Activated T-helper 1 cell treated with anti-CD3 and anti-CD28 coated beads, Interleukin-12 subunit alpha, Interleukin-12 subunit beta, Interleukin-2, Interleukin-4 antibody, amounts not matched to agents 30 ng/mL and 10 ng/mL and 1 ng/mL, durations not matched to agents 14 hours and 24 hours and 36 hours (primary cell): ENCODE measurements at regions of chr11 and their contacts with region 1.

Region 1: DNA sequence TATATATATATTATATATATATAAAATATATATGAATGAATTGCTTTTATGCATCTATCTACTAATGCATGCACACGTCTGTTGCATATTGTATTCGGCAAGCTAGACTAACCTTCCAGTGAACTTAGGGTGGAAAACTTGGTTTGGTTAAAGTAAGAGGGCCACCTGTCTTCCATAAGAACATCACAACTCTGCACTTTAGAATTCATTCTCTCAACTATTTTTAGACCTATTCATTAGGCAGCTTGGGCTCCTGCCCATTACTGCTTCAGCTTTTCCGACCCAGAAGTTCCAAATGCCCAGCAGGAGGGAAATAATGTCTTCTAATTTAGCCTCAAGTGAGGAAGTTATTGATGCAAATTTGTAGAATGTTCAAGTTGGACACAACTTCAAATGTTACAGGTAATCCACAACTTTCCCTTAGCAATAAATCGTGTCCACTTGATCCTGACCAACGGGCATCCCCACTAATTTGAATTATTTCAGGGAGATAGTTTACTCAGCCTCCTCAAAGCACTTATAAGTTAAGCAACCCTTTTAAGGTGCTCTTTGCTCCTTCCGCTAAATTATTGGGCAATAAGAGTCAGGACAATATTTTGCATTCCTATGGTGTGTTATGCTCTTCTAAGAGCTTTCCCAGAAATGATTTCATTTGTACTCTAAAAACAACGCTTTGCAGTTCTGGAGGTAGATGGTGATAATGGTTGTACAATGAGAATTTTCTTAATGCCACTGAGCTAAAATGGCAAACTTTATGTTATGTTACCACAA is 132.3 kb downstream of the OPCML start:
- DNase-seq: no peak
- H3K4me3 Mint-ChIP-seq: no peak overlapping the region
- H3K27ac Mint-ChIP-seq: no peak overlapping the region
- H3K4me1 Mint-ChIP-seq: no peaks in the 10 kb centered on the region
- H3K27me3 Mint-ChIP-seq: peaks cover 2% of the 10 kb centered on the region

Region 2: DNA sequence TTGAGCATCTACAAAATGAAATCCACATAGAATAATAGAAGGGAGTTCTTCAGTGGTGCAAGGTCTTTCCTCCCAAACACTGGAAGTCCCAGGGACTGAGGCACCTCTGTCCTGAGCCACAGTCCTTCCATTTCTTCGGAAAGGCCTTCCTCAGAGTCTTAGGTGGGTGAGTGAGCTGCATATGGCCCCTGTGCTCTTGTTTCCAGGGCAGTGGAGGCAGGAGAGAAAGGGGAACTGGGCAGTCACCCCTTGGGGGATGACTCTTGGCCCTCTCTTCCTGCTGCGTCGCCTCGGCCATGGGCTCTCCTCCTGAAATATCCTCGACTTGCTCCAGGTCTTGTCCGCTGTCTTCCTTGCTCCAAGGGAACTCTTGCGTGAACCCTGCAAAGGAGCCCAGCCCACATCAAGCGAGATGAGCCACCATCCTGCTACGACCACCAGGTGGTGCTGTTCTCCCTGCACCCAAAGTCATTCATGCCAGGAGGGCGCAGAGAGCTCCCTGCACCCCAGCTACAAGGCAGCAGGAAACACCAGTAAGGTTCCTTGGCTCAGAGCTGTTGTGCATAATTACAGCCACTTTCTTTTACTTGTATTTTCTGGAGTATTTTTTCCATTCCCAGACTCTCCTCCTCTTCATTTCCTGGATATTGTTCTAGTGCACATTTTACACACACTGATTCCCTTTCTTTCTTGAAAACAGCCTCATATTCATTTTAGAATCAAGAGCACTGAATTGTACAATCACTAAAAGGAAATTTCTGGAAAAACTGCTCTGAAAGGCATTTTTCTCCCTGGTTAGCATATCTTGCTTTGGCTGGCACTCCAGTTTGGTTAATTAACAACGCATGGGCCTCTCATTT is 265.5 kb before region 1 on chr11:
- intact Hi-C with region 1: loop called (anchors 2 kb)
- DNase-seq: peak; percentile 36
- H3K4me3 Mint-ChIP-seq: no peak overlapping the region
- H3K27ac Mint-ChIP-seq: no peak overlapping the region
- H3K4me1 Mint-ChIP-seq: no peaks in the 10 kb centered on the region
- H3K27me3 Mint-ChIP-seq: peaks cover 7% of the 10 kb centered on the region

Region 3: GRCh38 chr11:133723056-133723455 is 323.0 kb after region 1 on chr11:
- intact Hi-C with region 1: no loop called
- DNase-seq: no peak
- H3K4me3 Mint-ChIP-seq: no peak overlapping the region
- H3K27ac Mint-ChIP-seq: no peak overlapping the region
- H3K4me1 Mint-ChIP-seq: no peaks in the 10 kb centered on the region
- H3K27me3 Mint-ChIP-seq: no peaks in the 10 kb centered on the region